ENCODE measurements at regions of chr14 and their contacts with region 1.

Region 1: GRCh38 chr14:81710234-81710845 is 176.7 kb upstream of the SEL1L start:
- DNase-seq: peak in 1 of 10 donors; percentile 15

Region 2: DNA sequence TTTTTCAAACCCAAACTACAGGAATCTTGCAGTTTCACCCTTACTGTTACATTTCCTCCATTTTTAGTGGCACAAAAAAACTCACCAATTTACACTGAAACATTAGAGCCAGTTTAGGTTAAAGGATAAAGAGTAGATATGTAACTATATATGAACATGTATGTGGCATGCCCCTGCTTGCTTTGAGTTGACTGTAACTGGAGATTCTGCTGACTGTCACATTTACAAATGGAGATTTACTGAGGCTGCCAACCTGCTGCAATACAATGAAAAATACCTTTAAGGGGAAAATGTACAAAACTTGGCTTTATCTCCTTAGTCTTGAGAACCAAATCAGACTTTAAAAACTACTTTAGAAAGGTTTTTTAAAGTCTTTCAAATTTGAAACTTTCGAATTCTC is 338.5 kb before region 1 on chr14:
- intact Hi-C with region 1: no loop called
- DNase-seq: no peak

Region 3: DNA sequence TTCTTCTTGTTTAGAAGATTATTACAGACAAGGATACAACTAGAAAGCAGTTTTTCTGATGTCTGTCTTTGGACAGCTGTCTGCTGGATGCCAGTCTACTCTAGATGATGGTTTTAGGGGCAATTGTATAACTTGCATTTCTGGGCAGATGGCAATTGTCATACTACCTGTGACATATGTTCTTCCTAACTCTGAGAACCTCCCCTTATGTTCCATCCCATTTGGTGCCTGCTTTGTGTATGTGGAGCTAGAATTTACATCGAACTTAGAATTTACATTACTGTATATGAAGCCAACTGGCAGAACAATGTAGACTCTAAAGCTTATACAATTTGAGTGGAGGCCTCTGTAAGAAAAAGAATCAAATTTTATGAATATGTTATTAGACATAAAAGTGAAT is 253.5 kb after region 1 on chr14:
- intact Hi-C with region 1: no loop called
- DNase-seq: no peak

Region 4: GRCh38 chr14:81990312-81990761 is 280.0 kb after region 1 on chr14:
- intact Hi-C with region 1: loop called (anchors 10 kb)
- DNase-seq: peak in 5 of 10 donors; percentile 54 to 75 (median 58)

Region 5: GRCh38 chr14:82872494-82872893 is 1162.2 kb after region 1 on chr14:
- intact Hi-C with region 1: no loop called
- DNase-seq: peak in 1 of 10 donors; percentile 18

Measured in posterior cingulate gyrus (tissue), 11 donors.